ENCODE measurements at regions of chr16 and their contacts with region 1.

Region 1: DNA sequence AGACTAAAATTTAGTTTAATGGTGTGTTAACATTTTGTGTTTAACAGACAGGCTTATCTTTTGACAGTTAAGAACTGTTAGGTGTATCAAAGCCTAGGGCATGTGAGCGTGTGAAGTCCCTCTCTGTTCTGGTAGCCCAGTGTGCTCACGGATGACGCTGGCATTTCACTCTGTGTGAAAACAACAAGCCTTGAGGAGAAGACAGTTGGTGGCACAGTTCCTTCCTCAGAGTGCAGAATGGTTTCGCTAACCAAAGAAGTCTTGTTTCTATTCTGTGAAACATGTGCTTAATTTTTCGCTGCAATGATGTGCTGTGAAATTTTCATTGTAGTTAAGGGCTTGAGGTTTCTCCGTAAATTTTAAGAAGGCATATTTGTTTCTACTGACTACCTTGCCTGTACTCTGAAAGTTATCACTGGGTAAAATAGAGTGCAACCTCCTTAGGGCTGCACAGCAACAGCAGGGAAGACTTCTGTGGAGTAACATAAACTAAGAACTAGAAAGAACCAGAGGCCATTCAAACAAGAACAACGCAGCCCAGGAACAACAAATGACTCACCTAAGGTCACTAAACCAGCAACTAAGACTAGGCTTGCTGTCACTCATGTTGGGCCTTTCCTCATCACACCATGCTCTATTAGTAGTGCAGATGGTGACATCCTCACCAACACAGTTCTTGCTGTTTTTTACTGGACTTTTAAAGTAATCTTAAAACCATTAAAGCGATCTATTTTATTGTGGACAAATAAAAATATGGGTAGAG is 33.4 kb downstream of the BRD7 start:
- DNase-seq: peak; percentile 73
- H3K4me3 Mint-ChIP-seq: peak overlapping the region; percentile 44
- H3K27ac Mint-ChIP-seq: peak overlapping the region; percentile 96
- H3K4me1 Mint-ChIP-seq: peaks cover 66% of the 10 kb centered on the region
- H3K27me3 Mint-ChIP-seq: no peaks in the 10 kb centered on the region

Region 2: DNA sequence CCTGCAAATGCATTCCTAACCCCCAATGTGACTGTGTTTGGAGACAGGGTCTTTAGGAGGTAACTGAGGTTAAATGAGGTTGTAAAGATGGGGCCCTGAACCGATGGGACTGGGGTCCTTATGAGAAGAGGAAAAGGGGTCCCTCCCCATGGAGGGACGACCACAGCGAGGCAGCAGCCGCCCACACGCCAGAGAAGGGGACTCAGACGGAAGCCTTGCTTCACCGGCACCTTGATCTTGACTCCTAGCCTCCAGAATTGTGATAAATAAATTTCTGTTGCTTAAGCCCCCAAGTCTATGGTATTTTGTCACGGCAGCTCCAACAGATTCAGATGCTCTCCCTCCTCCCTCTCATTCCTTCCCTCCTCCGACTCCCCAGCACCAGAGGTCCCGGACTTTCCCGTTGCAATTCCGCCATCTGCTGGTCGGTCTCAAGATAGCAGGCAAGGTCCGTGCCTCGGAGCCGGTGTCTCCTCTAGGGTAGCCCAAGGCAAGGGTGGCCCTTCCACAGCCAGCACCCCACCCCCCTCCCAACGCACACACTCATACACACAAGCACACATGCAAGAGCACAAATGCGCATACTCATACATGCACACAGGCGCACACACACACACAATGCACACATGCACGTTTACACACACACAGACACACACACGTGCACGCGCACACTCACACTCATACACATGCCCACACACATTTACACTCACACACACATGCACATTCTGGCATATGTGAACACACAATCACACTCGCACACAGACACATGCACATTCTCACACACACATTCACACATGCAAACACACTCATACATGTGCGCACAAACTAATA is 984.9 kb before region 1 on chr16:
- CTCF ChIA-PET with region 1: no interaction called
- intact Hi-C with region 1: no loop called
- DNase-seq: peak; percentile 71
- H3K4me3 Mint-ChIP-seq: no peak overlapping the region
- H3K27ac Mint-ChIP-seq: no peak overlapping the region
- H3K4me1 Mint-ChIP-seq: no peaks in the 10 kb centered on the region
- H3K27me3 Mint-ChIP-seq: peaks cover 25% of the 10 kb centered on the region

Region 3: DNA sequence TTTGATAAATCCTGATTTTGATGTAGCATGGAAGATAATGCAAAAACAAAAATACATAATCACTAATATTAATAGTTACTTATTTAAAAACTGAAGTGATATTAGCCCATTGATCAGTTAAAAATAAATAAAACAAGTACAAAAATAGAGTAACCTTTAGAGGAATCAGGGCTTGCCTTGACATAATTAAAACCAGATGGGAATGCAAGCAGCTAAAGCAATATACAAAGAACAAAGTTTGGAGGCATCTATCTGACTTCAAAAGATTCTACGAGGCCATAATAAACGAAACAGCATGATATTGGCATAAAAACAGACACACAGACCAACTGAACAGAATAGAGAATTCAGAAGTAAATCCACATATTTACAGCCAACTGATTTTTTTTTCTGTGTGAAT is 284.6 kb before region 1 on chr16:
- CTCF ChIA-PET with region 1: no interaction called
- intact Hi-C with region 1: no loop called
- DNase-seq: no peak
- H3K4me3 Mint-ChIP-seq: no peak overlapping the region
- H3K27ac Mint-ChIP-seq: no peak overlapping the region
- H3K4me1 Mint-ChIP-seq: no peaks in the 10 kb centered on the region
- H3K27me3 Mint-ChIP-seq: no peaks in the 10 kb centered on the region

Region 4: DNA sequence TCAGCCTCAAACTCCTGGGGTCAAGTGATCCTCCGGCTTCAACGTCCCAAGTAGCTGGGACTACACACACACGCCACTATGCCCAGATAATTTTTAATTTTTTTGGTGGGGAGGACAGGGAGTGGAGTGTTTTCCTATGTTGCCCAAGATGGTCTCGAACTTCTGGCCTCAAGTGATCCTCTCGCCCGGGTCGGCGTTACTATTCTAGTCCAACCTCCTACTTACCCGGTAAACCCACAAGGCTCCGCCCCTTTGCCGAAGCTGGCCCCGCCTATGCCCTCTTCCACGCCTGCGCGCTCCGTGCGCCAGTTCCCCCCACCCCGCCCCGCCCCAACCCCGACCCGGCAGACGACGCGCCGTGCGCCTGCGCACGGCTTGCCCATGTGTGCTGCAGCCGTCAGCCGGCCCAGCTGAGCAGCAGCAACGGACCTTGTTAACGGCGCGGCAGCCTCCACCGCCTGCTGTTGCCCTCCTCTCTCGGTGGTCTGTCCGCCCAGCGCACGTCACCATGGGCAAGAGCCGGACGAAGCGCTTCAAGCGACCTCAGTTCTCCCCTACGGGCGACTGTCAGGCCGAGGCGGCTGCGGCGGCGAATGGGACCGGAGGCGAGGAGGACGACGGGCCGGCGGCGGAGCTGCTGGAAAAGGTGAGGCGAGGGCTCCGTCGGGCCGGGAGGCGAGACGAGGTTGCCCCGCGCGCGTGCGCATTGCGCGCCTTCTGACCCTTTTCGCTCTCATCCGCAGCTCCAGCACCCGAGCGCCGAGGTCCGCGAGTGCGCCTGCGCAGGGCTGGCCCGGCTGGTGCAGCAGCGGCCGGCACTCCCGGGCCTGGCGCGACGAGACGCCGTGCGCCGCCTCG is 269.5 kb before region 1 on chr16 and contains the start of gene HEATR3:
- CTCF ChIA-PET with region 1: no interaction called
- intact Hi-C with region 1: loop called (anchors 5 kb)
- DNase-seq: peak; percentile 96
- H3K4me3 Mint-ChIP-seq: peak within 1 kb of the TSS; percentile 86
- H3K27ac Mint-ChIP-seq: peak within 1 kb of the TSS; percentile 81
- H3K4me1 Mint-ChIP-seq: peaks cover 27% of the 10 kb centered on the region
- H3K27me3 Mint-ChIP-seq: no peaks in the 10 kb centered on the region
- total RNA-seq, gene HEATR3: 16.3 to 17.5 TPM

Region 5: GRCh38 chr16:50266337-50267091 is 68.9 kb before region 1 on chr16 and contains the start of gene ADCY7:
- CTCF ChIA-PET with region 1: no interaction called
- intact Hi-C with region 1: loop called (anchors 1 kb)
- DNase-seq: peak; percentile 91
- H3K4me3 Mint-ChIP-seq: peak within 1 kb of the TSS; percentile 86
- H3K27ac Mint-ChIP-seq: peak within 1 kb of the TSS; percentile 94
- H3K4me1 Mint-ChIP-seq: peaks cover 60% of the 10 kb centered on the region
- H3K27me3 Mint-ChIP-seq: peaks cover 3% of the 10 kb centered on the region
- total RNA-seq, gene ADCY7: 73.4 to 89.6 TPM

Region 6: DNA sequence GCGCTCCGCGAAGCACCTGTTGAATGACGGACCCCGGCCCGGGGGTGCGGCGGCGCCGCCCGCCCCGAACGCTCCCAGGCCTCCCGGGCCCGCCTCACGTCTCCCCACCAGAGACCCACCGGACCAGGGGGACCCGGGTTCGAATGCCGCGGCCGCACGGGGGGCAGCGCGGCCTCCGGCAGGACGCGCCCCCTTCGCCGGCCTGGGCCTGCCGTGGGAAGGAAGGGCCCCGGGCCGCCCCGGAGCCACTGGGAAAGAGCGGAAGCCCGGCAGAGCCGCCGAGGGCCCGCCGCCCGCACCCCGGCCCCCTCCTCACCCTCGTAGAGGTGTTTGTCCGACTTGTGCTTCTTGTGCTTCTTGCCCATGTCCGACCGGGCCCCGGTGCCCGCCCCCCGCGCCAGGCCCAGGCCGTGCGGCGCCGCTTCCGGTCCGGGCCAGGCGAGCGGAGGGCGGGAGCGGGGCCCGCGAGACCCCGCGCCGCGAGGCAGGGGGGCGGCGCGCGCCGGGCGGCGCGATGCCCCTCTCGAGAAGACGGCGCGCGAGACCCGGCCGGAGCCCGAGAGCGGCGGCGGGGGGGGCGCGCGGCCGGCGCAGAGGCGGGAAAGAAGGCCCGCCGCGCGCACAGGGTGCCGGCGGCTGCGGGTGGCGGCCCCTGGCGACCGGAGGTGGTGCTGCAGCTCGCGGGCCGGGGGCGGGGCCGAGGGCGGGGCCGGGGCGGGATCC is 33.2 kb after region 1 on chr16 and contains the start of gene BRD7:
- CTCF ChIA-PET with region 1: no interaction called
- intact Hi-C with region 1: loop called (anchors 2 kb)
- DNase-seq: peak; percentile 62
- H3K4me3 Mint-ChIP-seq: peak within 1 kb of the TSS; percentile 96
- H3K27ac Mint-ChIP-seq: peak within 1 kb of the TSS; percentile 86
- H3K4me1 Mint-ChIP-seq: peaks cover 46% of the 10 kb centered on the region
- H3K27me3 Mint-ChIP-seq: no peaks in the 10 kb centered on the region
- total RNA-seq, gene BRD7: 96.7 to 101 TPM

Region 7: GRCh38 chr16:50419116-50419515 is 83.7 kb after region 1 on chr16:
- CTCF ChIA-PET with region 1: no interaction called
- intact Hi-C with region 1: no loop called
- DNase-seq: no peak
- H3K4me3 Mint-ChIP-seq: no peak overlapping the region
- H3K27ac Mint-ChIP-seq: no peak overlapping the region
- H3K4me1 Mint-ChIP-seq: no peaks in the 10 kb centered on the region
- H3K27me3 Mint-ChIP-seq: peaks cover 2% of the 10 kb centered on the region

Region 8: GRCh38 chr16:50765260-50765659 is 429.9 kb after region 1 on chr16:
- CTCF ChIA-PET with region 1: no interaction called
- intact Hi-C with region 1: loop called (anchors 1 kb)
- DNase-seq: peak; percentile 23
- H3K4me3 Mint-ChIP-seq: peak overlapping the region; percentile 14
- H3K27ac Mint-ChIP-seq: peak overlapping the region; percentile 79
- H3K4me1 Mint-ChIP-seq: peaks cover 89% of the 10 kb centered on the region
- H3K27me3 Mint-ChIP-seq: no peaks in the 10 kb centered on the region